ENCODE measurements at regions of chr12 and their contacts with region 1.

Region 1: DNA sequence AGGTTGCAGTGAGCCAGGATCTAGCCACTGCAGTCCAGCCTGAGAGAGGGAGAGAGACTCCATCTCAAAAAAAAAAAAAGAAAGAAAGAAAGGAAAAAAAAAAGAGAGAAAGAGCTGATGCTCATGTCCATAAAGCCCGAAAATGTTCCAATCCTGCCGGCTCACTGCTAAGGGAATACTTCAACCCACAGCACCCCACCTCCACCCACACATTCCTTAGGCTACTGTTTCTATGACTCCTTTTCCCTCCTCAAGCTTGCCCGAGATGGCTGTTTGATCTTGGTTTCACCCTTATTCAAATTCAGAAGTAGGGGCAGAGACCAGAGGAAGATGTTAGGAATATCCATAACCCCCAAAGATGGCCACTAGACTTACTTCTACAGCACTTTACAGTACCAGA is 59.5 kb upstream of the RASSF3 start:
- DNase-seq: no peak
- H3K4me3 ChIP-seq: no peak overlapping the region
- CTCF ChIP-seq: no peak

Region 2: DNA sequence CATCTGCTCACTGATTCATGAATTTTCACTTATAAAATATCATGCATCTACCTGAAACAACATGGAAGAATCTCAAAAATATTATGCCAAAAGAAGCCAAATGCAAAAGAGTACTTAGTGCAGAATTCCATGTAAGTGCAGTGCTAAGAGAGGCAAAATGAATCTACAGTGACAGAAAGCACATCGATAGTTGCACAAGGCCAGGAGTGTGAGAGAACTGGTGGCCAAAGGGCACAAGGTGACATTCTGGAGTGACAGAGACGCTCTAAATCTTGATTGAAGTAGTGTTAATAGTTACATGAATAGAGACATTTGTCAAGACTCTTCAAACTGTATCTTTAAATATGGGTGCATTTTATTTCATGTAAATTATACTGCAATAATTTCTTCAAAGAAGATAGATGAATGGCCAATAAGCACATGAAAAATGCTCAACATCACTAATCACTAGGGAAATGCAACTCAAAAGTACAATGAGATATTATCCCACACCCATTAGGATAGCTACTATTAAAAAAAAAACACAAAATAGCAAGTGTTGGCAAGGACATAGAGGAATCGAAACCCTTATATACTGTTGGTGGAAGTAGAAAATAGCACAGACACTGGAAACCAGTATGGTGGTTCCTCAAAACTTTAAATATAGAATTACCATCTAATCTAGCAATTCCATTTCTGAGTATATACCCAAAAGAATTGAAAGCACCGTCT is 256.9 kb before region 1 on chr12:
- CTCF ChIA-PET with region 1: no interaction called
- POLR2A ChIA-PET with region 1: no interaction called
- DNase-seq: no peak
- H3K4me3 ChIP-seq: no peak overlapping the region
- CTCF ChIP-seq: no peak

Region 3: GRCh38 chr12:64522316-64522715 is 28.4 kb before region 1 on chr12:
- CTCF ChIA-PET with region 1: interaction called, 26 read pairs
- POLR2A ChIA-PET with region 1: no interaction called
- DNase-seq: peak; percentile 9
- H3K4me3 ChIP-seq: no peak overlapping the region
- CTCF ChIP-seq: no peak

Region 4: DNA sequence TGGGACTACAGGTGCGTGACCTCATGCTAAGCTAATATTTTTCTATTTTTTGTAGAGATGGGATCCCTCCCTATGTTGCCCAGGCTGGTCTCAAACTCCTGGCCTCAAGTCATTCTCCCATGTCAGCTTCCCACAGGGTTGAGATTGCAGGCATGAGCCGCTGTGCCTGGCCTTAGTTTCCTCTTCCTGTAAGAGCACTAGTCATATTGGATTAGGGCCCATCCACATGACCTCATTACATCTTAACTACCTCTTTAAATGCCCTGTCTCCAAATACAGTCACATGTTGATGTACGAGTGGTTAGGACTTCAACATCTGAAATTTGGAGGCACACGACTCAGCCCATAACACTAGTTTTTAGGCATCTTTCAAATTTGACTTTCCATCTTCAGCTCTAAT is 12.6 kb before region 1 on chr12:
- CTCF ChIA-PET with region 1: interaction called, 61 read pairs
- POLR2A ChIA-PET with region 1: no interaction called
- DNase-seq: no peak
- H3K4me3 ChIP-seq: no peak overlapping the region
- CTCF ChIP-seq: no peak

Region 5: DNA sequence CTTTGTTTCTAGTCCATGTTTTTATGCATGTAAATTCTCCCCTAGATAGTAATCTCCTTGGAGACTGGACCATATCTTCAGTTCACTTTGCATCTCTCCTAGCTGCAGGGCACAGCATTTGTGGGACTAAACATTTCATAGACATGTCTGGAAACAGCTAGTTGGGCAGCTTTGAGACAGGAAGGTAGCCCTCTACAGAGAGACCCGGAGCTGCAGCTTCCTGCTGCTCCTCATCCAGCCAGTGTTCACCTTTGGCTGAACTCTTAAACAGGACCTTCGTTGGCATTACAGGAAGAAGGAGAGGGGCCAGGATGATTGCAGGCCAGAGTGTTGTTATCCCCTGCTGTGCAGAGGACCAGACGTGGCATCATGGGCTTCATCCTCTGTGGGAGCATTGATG is 155.6 kb after region 1 on chr12:
- CTCF ChIA-PET with region 1: interaction called, 481 read pairs
- POLR2A ChIA-PET with region 1: no interaction called
- DNase-seq: no peak
- H3K4me3 ChIP-seq: no peak overlapping the region
- CTCF ChIP-seq: no peak

Region 6: GRCh38 chr12:64796208-64796845 is 245.6 kb after region 1 on chr12:
- CTCF ChIA-PET with region 1: interaction called, 12 read pairs
- POLR2A ChIA-PET with region 1: no interaction called
- DNase-seq: peak; percentile 61
- H3K4me3 ChIP-seq: no peak overlapping the region
- CTCF ChIP-seq: peak; percentile 59

Measured in AG04449 (cell line).